Uterus (tissue), 4 donors: ENCODE measurements at regions of chr7 and their contacts with region 1.

Region 1: GRCh38 chr7:50475340-50475739 is 25.2 kb upstream of the FIGNL1 start:
- DNase-seq: no peak
- H3K4me3 ChIP-seq: no peak overlapping the region
- H3K27ac ChIP-seq: no peak overlapping the region
- H3K4me1 ChIP-seq: no peaks in the 10 kb centered on the region
- H3K27me3 ChIP-seq: no peaks in the 10 kb centered on the region
- CTCF ChIP-seq: no peak
- POLR2A ChIP-seq: no peak

Region 2: DNA sequence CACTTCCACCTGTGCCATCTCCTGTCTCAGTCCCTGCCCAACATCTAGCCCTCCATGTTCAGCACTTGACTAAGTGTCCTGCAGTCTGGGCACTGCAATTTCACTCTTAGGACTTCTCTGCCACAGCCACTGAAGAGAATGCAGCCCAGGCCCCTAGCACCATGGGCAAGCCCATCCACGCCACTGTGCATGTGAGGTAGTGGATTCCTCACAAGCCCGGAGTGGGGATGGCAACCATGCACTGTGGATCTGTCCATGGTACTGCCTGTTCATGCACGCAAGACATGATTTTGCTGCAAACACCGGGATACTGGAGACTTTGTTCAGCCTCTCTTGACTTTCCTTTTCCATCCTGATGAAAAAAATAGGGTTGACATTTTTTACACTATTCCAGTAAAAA is 77.6 kb after region 1 on chr7:
- intact Hi-C with region 1: no loop called
- DNase-seq: no peak
- H3K4me3 ChIP-seq: no peak overlapping the region
- H3K27ac ChIP-seq: no peak overlapping the region
- H3K4me1 ChIP-seq: no peaks in the 10 kb centered on the region
- H3K27me3 ChIP-seq: no peaks in the 10 kb centered on the region
- CTCF ChIP-seq: no peak
- POLR2A ChIP-seq: no peak

Region 3: GRCh38 chr7:50679218-50680007 is 204.1 kb after region 1 on chr7:
- intact Hi-C with region 1: loop called (anchors 10 kb)
- DNase-seq: no peak
- H3K4me3 ChIP-seq: no peak overlapping the region
- H3K27ac ChIP-seq: peak overlapping the region in 1 of 2 donors; percentile 20
- H3K4me1 ChIP-seq: no peaks in the 10 kb centered on the region
- H3K27me3 ChIP-seq: no peaks in the 10 kb centered on the region
- CTCF ChIP-seq: peak; percentile 35 to 61 (median 54)
- POLR2A ChIP-seq: no peak